Prostate gland (tissue), 2 donors: ENCODE measurements at regions of chr16 and their contacts with region 1.

Region 1: GRCh38 chr16:19067349-19068236 is at the start of gene COQ7:
- DNase-seq: peak; percentile 99
- H3K4me3 ChIP-seq: peak within 1 kb of the TSS; percentile 69 to 73
- H3K27ac ChIP-seq: peak within 1 kb of the TSS; percentile 99 to 100
- H3K4me1 ChIP-seq: no peaks in the 10 kb centered on the region
- H3K27me3 ChIP-seq: no peaks in the 10 kb centered on the region
- CTCF ChIP-seq: peak in 3 of 4 experiments; percentile 14 to 27 (median 25)
- POLR2A ChIP-seq: peak; percentile 55
- total RNA-seq, gene COQ7: 31.1 to 32.4 TPM

Region 2: DNA sequence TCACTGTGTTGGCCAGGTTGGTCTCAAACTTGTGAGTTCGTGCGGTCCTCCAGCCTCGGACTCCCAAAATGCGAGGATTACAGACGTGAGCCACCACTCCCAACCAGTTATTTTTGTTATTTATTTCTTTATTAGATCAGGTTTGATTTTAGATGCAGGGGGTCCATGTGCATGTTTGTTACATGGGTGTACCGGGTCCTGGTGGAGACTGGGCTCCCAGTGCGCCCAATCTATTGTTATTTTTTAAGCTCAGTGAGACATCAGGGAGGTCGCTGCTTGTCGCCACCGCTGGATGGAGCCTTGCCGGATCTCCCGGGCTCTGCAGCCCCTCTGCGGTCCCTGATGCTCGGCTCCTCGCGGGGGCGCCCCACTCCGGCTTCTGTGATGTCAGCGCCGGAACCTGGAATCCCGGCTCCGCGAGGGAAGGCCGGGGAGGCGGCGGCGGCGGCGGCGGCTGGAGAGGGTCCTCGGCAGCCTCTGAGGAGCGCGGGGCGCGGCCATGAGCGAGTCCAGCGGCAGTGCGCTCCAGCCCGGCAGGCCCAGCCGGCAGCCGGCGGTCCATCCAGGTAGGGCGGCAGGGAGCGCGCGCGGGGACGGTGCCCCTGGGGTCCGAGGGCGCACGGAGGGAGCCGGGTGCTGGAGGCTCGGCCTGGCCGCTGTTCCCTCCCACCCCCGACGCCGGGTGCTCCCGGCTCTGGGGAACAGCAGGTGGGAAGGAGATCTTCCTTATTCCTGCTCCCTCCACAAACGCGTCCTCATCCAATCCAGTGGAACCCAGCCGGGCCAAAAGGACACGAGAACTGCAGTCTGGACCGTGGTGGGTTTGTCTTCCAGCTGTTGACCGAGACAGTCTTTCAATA is 83.8 kb before region 1 on chr16 and contains the start of gene TMC7:
- intact Hi-C with region 1: loop called (anchors 5 kb)
- DNase-seq: peak; percentile 80
- H3K4me3 ChIP-seq: peak within 1 kb of the TSS; percentile 55 to 65
- H3K27ac ChIP-seq: peak within 1 kb of the TSS; percentile 57 to 68
- H3K4me1 ChIP-seq: peaks cover 2% of the 10 kb centered on the region
- H3K27me3 ChIP-seq: no peaks in the 10 kb centered on the region
- CTCF ChIP-seq: peak in 3 of 4 experiments; percentile 82 to 89 (median 87)
- POLR2A ChIP-seq: peak; percentile 31
- total RNA-seq, gene TMC7: 1.6 to 2.9 TPM

Region 3: DNA sequence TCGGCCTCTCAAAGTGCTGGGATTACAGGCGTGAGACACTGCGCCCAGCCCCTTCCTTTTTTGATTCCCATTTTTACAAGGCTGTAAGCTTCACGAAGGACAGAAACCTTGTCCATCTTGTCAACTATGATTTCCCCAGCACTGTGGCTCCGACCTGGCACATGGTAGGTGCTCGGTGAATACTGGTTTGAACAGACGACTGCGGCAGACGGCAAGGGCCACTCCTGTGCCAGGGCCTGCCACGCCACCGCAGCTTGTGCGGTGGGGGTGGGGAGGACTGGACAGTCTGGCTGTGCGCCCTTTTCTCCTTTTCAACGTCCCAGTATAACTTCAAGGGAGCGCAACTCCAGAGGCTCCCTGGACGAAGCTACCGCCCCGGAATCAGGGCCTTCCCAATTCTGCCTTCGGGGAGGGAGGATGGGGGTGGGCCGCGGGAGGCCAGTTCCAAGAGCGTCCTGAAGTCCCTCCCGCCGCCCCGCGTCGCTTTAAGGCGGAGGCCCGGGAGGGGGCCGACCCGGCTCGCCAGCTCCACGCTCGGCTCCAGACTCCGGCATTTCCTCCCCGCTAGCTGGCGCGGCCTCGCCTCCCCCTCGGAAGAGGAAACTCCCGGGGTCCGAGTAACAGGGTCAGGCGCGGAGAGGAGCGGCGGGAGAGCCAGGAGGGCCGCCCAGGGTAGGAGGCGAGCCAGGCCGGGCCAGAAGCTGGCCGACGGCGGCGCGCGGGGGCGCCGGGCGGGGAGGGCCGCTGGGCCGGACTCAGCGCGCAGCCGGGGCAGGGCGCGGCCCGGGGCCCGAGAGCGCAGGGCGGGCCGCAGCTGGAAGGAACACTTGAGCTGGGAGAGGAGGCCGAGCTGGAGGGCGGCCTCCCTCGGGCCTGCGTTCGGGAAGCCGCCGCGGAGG is 46.1 kb after region 1 on chr16 and contains the start of gene ITPRIPL2:
- intact Hi-C with region 1: loop called (anchors 5 kb)
- DNase-seq: peak; percentile 85
- H3K4me3 ChIP-seq: peak within 1 kb of the TSS; percentile 57 to 67
- H3K27ac ChIP-seq: peak within 1 kb of the TSS; percentile 86 to 89
- H3K4me1 ChIP-seq: peaks cover 8% of the 10 kb centered on the region
- H3K27me3 ChIP-seq: no peaks in the 10 kb centered on the region
- CTCF ChIP-seq: peak in 2 of 4 experiments; percentile 21 to 24
- POLR2A ChIP-seq: peak; percentile 68
- total RNA-seq, gene ITPRIPL2: 56.6 to 66.4 TPM

Region 4: GRCh38 chr16:19521471-19522396 is 454.1 kb after region 1 on chr16 and contains the start of gene GDE1:
- intact Hi-C with region 1: loop called (anchors 5 kb)
- DNase-seq: peak; percentile 97
- H3K4me3 ChIP-seq: peak within 1 kb of the TSS; percentile 71 to 82
- H3K27ac ChIP-seq: peak within 1 kb of the TSS; percentile 86 to 90
- H3K4me1 ChIP-seq: peaks cover 9% of the 10 kb centered on the region
- H3K27me3 ChIP-seq: no peaks in the 10 kb centered on the region
- CTCF ChIP-seq: peak in 3 of 4 experiments; percentile 2 to 47 (median 3)
- POLR2A ChIP-seq: peak; percentile 95
- total RNA-seq, gene GDE1: 67.8 to 92.1 TPM